A673 (cell line): ENCODE measurements at regions of chr15 and their contacts with region 1.

Region 1: DNA sequence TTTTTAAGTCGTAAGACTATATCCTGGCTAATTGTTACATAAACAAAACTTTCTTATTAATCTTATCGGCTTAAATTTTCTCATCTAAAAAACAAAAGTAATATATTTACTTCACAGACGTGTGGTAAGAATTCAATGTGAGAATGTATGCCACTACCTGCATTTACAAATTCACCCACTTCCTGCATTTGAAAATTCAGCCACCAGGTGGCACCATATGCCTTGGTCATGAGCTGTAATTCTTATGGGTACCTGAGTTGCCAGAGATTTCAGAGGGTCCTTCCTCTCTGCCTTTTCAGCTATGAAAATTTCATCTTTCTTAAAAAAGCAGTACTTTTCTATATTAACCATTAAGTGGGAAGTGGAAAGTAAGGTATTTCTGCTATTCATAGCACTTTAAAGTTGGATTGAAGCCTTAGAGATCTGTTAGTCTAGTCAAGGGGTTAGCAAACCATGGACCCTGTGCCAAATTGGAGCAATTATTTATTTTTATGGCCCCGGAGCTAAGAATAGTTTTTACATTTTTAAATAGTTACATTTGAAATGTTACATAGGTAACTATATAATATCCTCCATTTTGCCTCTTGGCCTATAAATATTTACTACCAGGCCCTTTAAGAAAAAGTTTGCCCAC is 127.8 kb downstream of the HCN4 start:
- DNase-seq: peak; percentile 74
- H3K4me3 ChIP-seq: no peak overlapping the region
- H3K27ac ChIP-seq: no peak overlapping the region
- H3K4me1 ChIP-seq: no peaks in the 10 kb centered on the region
- H3K27me3 ChIP-seq: no peaks in the 10 kb centered on the region
- CTCF ChIP-seq: peak; percentile 90

Region 2: DNA sequence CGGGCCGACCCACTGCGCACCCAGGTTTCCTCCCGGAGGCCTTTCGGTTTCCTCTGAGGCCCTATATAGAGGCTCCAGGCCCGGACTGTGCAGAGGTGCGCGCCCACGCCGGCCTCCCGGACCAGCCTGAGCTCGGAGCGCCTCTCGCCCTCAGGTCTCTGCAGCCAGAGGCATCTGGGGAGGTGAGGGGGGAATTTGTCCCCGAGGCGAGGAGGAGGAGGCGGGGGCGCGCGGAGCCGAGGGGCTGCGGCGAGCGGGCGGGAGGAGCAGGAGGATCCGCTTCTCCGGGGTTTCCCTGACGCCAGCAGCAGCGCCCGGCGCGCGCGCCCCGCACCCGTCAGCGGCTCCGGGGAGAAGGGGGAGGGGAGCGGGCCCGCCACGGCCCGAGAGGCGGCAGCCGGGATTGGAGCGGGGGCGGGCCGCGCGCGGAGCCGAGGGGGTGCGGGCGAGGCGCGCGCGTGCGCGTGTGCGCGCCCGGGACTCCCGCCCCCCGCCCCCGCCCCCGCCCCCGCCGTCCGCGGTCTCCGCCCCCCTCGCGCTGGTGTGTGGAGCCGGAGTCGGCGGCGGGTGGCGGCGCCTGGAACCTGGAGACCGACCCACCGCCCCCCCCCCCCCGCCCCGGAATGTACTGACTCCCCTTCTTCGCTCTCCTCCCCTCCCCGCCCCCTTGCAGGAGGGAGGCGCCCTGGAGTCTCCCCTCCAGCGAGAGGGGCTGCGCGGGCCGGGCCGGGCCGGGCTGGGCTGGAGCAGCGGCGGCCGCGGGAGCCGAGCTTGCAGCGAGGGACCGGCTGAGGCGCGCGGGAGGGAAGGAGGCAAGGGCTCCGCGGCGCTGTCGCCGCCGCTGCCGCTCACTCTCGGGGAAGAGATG is 188.9 kb before region 1 on chr15 and contains the start of gene NEO1:
- CTCF ChIA-PET with region 1: no interaction called
- POLR2A ChIA-PET with region 1: no interaction called
- intact Hi-C with region 1: loop called (anchors 10 kb)
- DNase-seq: peak; percentile 92
- H3K4me3 ChIP-seq: peak within 1 kb of the TSS; percentile 66
- H3K27ac ChIP-seq: peak within 1 kb of the TSS; percentile 84
- H3K4me1 ChIP-seq: peaks cover 29% of the 10 kb centered on the region
- H3K27me3 ChIP-seq: no peaks in the 10 kb centered on the region
- CTCF ChIP-seq: no peak
- total RNA-seq, gene NEO1: 63.7 and 72.6 TPM in 2 replicates

Region 3: DNA sequence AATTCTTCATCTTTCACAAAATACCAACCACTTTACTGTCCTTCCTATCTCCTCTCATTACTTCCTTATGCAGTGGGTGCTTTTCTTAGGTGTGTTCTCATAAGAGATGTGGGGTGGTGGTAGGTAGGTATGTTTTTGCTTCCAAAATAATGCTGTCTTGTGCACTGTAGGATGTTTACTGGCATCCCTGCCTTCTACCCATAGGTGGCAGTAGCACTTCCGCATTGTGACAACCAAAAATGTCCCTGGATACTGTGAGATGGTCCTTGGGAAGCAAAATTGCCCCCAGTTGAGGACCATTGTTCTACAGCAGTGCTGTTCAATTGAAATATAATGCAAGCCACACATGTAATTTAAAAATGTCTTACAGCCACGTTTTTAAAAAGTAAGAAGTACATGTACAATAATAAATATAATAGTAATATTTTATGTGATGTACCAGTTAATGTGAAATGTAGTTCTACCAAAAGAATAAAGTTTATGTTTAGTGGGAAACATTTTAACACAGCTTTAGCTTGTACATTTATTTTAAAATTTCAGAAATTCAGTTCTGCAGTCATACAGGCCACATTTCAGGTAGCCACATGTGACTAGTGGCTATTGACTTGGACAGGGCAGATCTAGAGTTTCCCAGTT is 113.6 kb before region 1 on chr15:
- CTCF ChIA-PET with region 1: no interaction called
- POLR2A ChIA-PET with region 1: no interaction called
- intact Hi-C with region 1: loop called (anchors 10 kb)
- DNase-seq: peak; percentile 68
- H3K4me3 ChIP-seq: no peak overlapping the region
- H3K27ac ChIP-seq: no peak overlapping the region
- H3K4me1 ChIP-seq: no peaks in the 10 kb centered on the region
- H3K27me3 ChIP-seq: no peaks in the 10 kb centered on the region
- CTCF ChIP-seq: peak; percentile 90